Motor neuron (in vitro differentiated cells): ENCODE measurements at regions of chr9 and their contacts with region 1.

Region 1: DNA sequence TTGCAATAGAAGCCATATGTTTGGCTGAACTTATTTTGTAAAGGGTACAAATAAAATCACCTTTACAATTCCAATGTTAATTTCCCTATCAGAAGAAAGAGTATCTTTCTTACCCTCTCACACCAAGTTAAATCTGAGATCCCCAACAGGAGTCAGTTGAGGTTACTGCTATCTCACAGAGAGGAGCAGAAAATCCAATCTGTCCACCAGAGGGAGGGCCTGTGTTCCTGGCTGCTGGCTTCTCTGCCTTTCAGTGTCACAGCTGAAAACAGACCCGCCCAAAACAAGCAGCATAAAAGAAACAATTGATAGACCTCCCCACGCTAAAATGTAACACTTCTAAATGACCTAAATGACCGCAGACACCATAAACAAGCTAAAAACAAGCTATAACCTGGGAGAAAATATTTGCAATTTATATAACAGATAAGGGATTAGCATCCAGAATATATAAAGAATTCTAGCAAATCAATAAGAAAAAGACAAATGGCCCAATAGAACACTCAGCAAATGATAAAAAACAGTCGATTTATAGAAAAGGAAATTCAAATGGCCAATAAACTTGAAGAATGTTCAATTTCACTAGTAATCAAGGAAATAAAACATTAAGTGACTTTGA is 24.5 kb upstream of the MVB12B start:
- ATAC-seq: peak in 6 of 8 experiments; percentile 10 to 99 (median 62)
- H3K4me3 ChIP-seq: no peak overlapping the region
- H3K27ac ChIP-seq: no peak overlapping the region
- H3K4me1 ChIP-seq: peaks cover 18 to 26% of the 10 kb centered on the region in 2 donors

Region 2: DNA sequence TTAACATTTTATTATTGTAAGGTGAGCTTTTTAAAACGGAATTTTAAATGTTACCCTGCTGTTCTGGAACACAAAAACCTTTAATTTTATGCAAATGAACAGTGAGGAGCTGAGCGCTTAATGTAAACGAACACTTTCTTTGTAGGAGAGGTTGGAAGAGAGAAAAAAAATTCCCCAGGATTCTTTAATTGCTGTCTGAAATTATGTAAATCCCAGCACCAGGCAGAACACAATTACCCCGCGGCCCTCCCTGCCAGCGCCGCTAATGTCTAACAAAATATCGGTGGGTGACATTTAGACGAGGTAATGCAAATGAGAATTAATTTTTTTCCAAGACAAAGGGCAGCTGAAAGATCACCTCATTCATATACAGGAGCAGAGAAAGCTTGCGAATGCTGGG is 118.8 kb before region 1 on chr9:
- in situ Hi-C with region 1: no loop called
- ATAC-seq: no peak
- H3K4me3 ChIP-seq: no peak overlapping the region
- H3K27ac ChIP-seq: no peak overlapping the region
- H3K4me1 ChIP-seq: no peaks in the 10 kb centered on the region

Region 3: GRCh38 chr9:126398403-126399058 is 96.4 kb after region 1 on chr9:
- in situ Hi-C with region 1: loop called in 1 of 9 experiments (anchors 10 kb)
- ATAC-seq: peak; percentile 83 to 97 (median 93)
- H3K4me3 ChIP-seq: no peak overlapping the region
- H3K27ac ChIP-seq: no peak overlapping the region
- H3K4me1 ChIP-seq: peaks cover 2 to 8% of the 10 kb centered on the region in 2 donors

Region 4: DNA sequence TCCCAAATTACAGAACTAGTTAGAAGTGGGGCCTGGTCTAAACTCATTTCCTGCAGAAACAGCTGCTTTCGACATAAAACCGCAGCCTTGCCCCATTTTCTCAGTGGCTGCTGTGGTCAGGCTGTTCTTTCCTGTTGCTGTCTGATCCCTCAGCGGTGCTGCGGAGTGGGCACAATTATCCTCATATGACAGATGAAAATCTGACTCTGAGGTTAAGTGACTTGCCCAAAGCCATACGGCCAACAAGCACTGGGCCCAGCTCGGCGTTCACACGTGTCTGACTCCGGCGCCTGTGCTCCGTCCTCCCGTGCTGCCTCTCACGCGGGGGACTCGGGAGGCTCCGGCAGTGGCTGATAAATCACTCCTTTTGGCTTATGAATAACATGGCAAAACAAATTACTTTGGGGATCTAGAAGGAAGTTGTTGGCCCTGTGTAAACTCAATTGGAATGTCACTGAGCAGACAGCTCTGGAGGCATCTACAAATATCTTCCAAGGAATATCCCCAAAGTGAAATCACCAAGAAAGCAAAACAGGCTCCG is 169.1 kb after region 1 on chr9:
- in situ Hi-C with region 1: loop called in 2 of 9 experiments (anchors 10 to 25 kb)
- ATAC-seq: peak in 3 of 8 experiments; percentile 49 to 81 (median 73)
- H3K4me3 ChIP-seq: no peak overlapping the region
- H3K27ac ChIP-seq: no peak overlapping the region
- H3K4me1 ChIP-seq: peaks cover 5 to 12% of the 10 kb centered on the region in 2 donors

Region 5: GRCh38 chr9:126490871-126491567 is 188.9 kb after region 1 on chr9:
- in situ Hi-C with region 1: loop called in 1 of 9 experiments (anchors 25 kb)
- ATAC-seq: peak; percentile 39 to 70 (median 50)
- H3K4me3 ChIP-seq: no peak overlapping the region
- H3K27ac ChIP-seq: no peak overlapping the region
- H3K4me1 ChIP-seq: peaks cover 0 to 25% of the 10 kb centered on the region in 2 donors